IMR-90 (cell line): ENCODE measurements at regions of chr7 and their contacts with region 1.

Region 1: GRCh38 chr7:142357953-142358520 is 100.2 kb upstream of the PRSS58 start:
- DNase-seq: peak; percentile 83
- ATAC-seq: peak; percentile 96
- H3K4me3 ChIP-seq: no peak overlapping the region
- H3K27ac ChIP-seq: no peak overlapping the region
- H3K4me1 ChIP-seq: peaks cover 2% of the 10 kb centered on the region; the same call in 1 of the 2 replicates
- H3K27me3 ChIP-seq: peaks cover 3% of the 10 kb centered on the region; the same call in 1 of the 2 replicates
- CTCF ChIP-seq: peak; percentile 88
- POLR2A ChIP-seq: no peak
- RAD21 ChIP-seq: peak; percentile 82

Region 2: GRCh38 chr7:142412551-142413193 is 54.6 kb after region 1 on chr7:
- CTCF ChIA-PET with region 1: interaction called, 3 read pairs
- POLR2A ChIA-PET with region 1: no interaction called
- dilution Hi-C with region 1: no loop called
- in situ Hi-C with region 1: no loop called
- intact Hi-C with region 1: loop called (anchors 2 kb)
- DNase-seq: peak; percentile 73
- ATAC-seq: peak; percentile 79
- H3K4me3 ChIP-seq: no peak overlapping the region
- H3K27ac ChIP-seq: no peak overlapping the region
- H3K4me1 ChIP-seq: peaks cover 2% of the 10 kb centered on the region; the same call in 1 of the 2 replicates
- H3K27me3 ChIP-seq: no peaks in the 10 kb centered on the region
- CTCF ChIP-seq: peak; percentile 73
- POLR2A ChIP-seq: no peak
- RAD21 ChIP-seq: peak; percentile 54

Region 3: GRCh38 chr7:142496545-142497041 is 138.6 kb after region 1 on chr7:
- CTCF ChIA-PET with region 1: no interaction called
- POLR2A ChIA-PET with region 1: no interaction called
- dilution Hi-C with region 1: no loop called
- in situ Hi-C with region 1: no loop called
- intact Hi-C with region 1: loop called (anchors 1 kb)
- DNase-seq: peak; percentile 54
- ATAC-seq: peak; percentile 50
- H3K4me3 ChIP-seq: no peak overlapping the region
- H3K27ac ChIP-seq: no peak overlapping the region
- H3K4me1 ChIP-seq: peaks cover 8% of the 10 kb centered on the region
- H3K27me3 ChIP-seq: 0 out of 2 replicates have a peak, but pooled peaks cover 1% of the 10 kb centered on the region
- CTCF ChIP-seq: peak; percentile 68
- POLR2A ChIP-seq: no peak
- RAD21 ChIP-seq: peak; percentile 53